ENCODE measurements at regions of chrX and their contacts with region 1.

Region 1: DNA sequence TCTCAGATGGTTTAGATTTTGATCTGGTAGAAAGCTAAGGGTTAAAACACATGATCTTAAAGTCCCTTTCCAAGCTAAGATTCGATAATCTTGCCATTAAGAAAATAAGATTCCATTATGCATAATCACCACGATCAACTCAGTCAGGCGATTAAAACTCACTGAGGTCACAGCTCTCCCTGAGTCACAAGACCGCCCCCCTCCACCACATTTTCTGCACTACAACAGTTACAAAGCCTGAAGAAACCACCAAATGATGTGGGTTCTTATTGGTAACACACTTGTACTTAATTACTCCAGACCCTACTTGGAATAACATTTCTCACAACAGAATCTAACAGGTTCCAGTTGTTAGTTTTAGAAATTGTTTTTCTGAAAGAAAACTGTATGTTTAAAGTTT is 62.8 kb downstream of the SH3KBP1 start:
- DNase-seq: peak; percentile 57
- H3K4me3 Mint-ChIP-seq: no peak overlapping the region
- H3K27ac Mint-ChIP-seq: no peak overlapping the region
- H3K4me1 Mint-ChIP-seq: peaks cover 34% of the 10 kb centered on the region
- H3K27me3 Mint-ChIP-seq: no peaks in the 10 kb centered on the region

Region 2: GRCh38 chrX:19811807-19812604 is 12.6 kb before region 1 on chrX:
- CTCF ChIA-PET with region 1: no interaction called
- intact Hi-C with region 1: loop called (anchors 2 kb)
- DNase-seq: no peak
- H3K4me3 Mint-ChIP-seq: no peak overlapping the region
- H3K27ac Mint-ChIP-seq: peak overlapping the region; percentile 31
- H3K4me1 Mint-ChIP-seq: peaks cover 57% of the 10 kb centered on the region
- H3K27me3 Mint-ChIP-seq: no peaks in the 10 kb centered on the region

Measured in activated naive CD4-positive, alpha-beta T cell treated with anti-CD3 and anti-CD28 coated beads for 36 hours (primary cell).